Heart right ventricle (tissue), 16 donors: ENCODE measurements at regions of chr22 and their contacts with region 1.

Region 1: DNA sequence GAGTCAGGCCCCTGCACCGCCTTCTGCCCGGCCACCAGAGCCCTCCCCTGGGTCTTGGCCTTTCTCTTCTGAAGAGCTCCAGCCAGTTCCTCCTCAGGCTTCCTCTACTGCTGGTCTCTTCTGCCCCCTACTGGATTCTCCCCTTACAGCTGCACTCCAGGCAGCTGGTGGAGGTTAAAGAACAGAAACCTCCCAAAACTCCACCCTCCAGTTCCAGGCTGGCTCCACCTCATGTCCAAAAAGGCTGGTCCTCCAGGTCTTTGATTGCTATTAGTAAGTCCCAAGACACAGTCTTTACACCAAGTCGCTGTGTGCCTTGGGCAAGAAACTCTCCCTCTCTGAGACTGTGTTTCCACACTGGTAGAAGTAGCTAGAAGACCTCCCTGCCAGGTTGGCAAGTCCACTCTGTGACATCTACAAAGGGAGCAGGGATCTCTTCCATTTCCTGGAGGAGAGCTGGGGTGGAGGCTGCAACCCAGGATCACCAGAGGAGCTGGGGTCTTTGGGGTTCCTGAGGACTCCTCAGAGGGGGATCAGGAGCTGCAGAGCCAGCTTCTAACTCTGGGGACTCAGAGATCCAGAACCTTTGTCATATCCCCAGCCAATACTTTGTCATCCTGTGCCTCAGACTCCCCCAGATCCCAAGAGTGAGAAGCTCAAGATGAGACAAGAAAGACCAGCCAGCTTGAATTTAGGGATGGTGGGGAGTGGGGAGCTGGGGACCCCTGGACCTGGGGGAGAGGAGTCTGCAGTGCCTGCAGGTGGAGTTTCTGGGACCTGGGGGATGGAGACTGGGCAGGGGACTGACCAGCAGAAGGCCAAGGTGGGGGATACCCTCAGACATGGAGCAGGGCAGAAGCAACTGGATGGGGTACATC is 3.4 kb upstream of the IGLL5 start:
- DNase-seq: peak in 1 of 2 donors; percentile 64
- ATAC-seq: peak in 6 of 8 donors; percentile 55 to 80 (median 72)
- H3K4me3 ChIP-seq: no peak overlapping the region
- H3K27ac ChIP-seq: no peak overlapping the region
- H3K4me1 ChIP-seq: no peaks in the 10 kb centered on the region
- H3K27me3 ChIP-seq: peaks cover 0 to 47% (median 20%) of the 10 kb centered on the region in 7 donors
- CTCF ChIP-seq: peak; percentile 34 to 81 (median 72)

Region 2: GRCh38 chr22:22342697-22343580 is 541.3 kb before region 1 on chr22:
- intact Hi-C with region 1: loop called in 1 of 10 experiments (anchors 10 kb)
- DNase-seq: peak in 1 of 2 donors; percentile 31
- ATAC-seq: peak in 2 of 8 donors; percentile 35 to 68
- H3K4me3 ChIP-seq: no peak overlapping the region
- H3K27ac ChIP-seq: no peak overlapping the region
- H3K4me1 ChIP-seq: peaks cover 0 to 15% (median 0%) of the 10 kb centered on the region in 9 donors
- H3K27me3 ChIP-seq: peaks cover 0 to 51% (median 27%) of the 10 kb centered on the region in 7 donors
- CTCF ChIP-seq: peak; percentile 63 to 90 (median 73)

Region 3: DNA sequence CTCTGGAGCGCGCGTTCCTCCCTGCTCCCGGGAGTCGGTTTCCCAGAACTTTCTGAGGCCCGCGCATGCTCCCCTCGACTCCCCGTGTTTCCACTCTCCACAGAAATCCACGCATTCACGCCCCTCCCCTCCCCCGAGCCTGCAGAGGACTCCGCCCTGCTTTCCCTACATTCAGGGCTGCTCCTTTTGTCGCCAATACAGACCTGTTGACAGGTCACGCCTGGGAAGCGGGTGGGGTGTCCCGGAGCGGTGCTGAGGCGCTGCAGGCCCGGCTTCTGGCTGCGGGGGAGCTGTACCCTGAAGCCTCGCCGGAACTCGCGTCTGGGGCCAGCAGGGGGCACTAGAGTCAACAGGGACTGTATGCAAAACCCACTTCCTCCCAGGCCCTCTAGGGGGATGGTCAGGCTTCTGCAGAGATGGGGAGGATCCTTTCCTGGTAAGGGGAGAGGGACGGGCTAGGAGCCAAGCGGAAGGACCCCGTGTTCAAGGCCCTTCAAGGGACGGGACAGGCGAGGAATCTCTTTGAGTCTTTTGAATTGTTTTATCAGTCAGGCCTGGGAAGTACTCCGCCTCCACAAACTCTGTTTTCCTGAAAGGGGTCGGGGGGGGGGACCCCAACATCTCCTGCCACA is 325.2 kb before region 1 on chr22 and contains the start of gene PRAME:
- intact Hi-C with region 1: no loop called
- DNase-seq: peak in 1 of 2 donors; percentile 39
- ATAC-seq: peak in 2 of 8 donors; percentile 48 to 56
- H3K4me3 ChIP-seq: no peak within 1 kb of the TSS
- H3K27ac ChIP-seq: no peak within 1 kb of the TSS
- H3K4me1 ChIP-seq: peaks cover 0 to 10% (median 0%) of the 10 kb centered on the region in 9 donors
- H3K27me3 ChIP-seq: peaks cover 0 to 2% (median 0%) of the 10 kb centered on the region in 7 donors
- CTCF ChIP-seq: peak; percentile 12 to 71 (median 38)
- total RNA-seq, gene PRAME: 0.35 to 0.49 (median 0.46) TPM in 3 of 10 donors, not detected in the others

Region 4: GRCh38 chr22:22655452-22656290 is 228.6 kb before region 1 on chr22:
- intact Hi-C with region 1: no loop called
- DNase-seq: no peak
- ATAC-seq: no peak
- H3K4me3 ChIP-seq: no peak overlapping the region
- H3K27ac ChIP-seq: no peak overlapping the region
- H3K4me1 ChIP-seq: no peaks in the 10 kb centered on the region
- H3K27me3 ChIP-seq: peaks cover 0 to 15% (median 3%) of the 10 kb centered on the region in 7 donors
- CTCF ChIP-seq: no peak

Region 5: GRCh38 chr22:22753526-22754267 is 130.6 kb before region 1 on chr22:
- intact Hi-C with region 1: loop called in 1 of 10 experiments (anchors 10 kb)
- DNase-seq: peak in 1 of 2 donors; percentile 31
- ATAC-seq: peak in 6 of 8 donors; percentile 36 to 51 (median 42)
- H3K4me3 ChIP-seq: no peak overlapping the region
- H3K27ac ChIP-seq: peak overlapping the region in 1 of 10 donors; percentile 68
- H3K4me1 ChIP-seq: peaks cover 0 to 23% (median 0%) of the 10 kb centered on the region in 9 donors
- H3K27me3 ChIP-seq: peaks cover 0 to 28% (median 3%) of the 10 kb centered on the region in 7 donors
- CTCF ChIP-seq: peak in 7 of 9 donors; percentile 49 to 77 (median 53)

Region 6: GRCh38 chr22:22802339-22802970 is 81.8 kb before region 1 on chr22:
- intact Hi-C with region 1: loop called in 4 of 10 experiments (anchors 5 to 10 kb)
- DNase-seq: no peak
- ATAC-seq: no peak
- H3K4me3 ChIP-seq: no peak overlapping the region
- H3K27ac ChIP-seq: no peak overlapping the region
- H3K4me1 ChIP-seq: no peaks in the 10 kb centered on the region
- H3K27me3 ChIP-seq: peaks cover 0 to 61% (median 27%) of the 10 kb centered on the region in 7 donors
- CTCF ChIP-seq: peak in 3 of 9 donors; percentile 40 to 49 (median 44)

Region 7: GRCh38 chr22:22810018-22810427 is 74.2 kb before region 1 on chr22:
- intact Hi-C with region 1: loop called in 4 of 10 experiments (anchors 5 to 10 kb)
- DNase-seq: peak in 1 of 2 donors; percentile 40
- ATAC-seq: peak in 6 of 8 donors; percentile 46 to 74 (median 70)
- H3K4me3 ChIP-seq: no peak overlapping the region
- H3K27ac ChIP-seq: no peak overlapping the region
- H3K4me1 ChIP-seq: no peaks in the 10 kb centered on the region
- H3K27me3 ChIP-seq: peaks cover 0 to 33% (median 5%) of the 10 kb centered on the region in 7 donors
- CTCF ChIP-seq: peak in 8 of 9 donors; percentile 31 to 86 (median 74)

Region 8: DNA sequence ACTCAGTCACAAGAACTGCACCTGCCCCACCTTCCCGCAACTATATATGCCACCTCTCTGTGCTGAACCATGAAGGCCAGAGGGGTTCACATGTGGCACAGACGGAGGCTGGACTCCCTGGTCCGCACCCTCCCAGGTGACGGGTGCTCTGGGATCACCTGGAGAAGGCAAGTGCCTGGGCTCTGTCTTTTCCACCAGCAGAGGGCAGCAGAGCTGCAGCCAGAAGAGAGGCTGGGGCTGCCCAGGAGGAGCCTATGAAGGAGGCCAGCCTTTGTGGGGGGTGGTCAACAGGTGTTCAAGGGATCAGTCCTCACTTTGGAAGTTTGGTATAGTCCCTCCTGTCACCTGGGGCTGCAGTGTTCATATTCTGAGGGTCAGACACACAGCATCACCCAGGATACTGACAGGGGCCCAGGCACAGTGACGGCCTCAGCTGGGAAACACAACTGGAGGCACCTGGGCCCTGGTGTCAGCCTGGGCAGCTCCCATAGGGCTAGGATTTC is 35.8 kb before region 1 on chr22:
- intact Hi-C with region 1: loop called in 1 of 10 experiments (anchors 5 kb)
- DNase-seq: peak; percentile 41 to 51
- ATAC-seq: peak in 7 of 8 donors; percentile 61 to 79 (median 65)
- H3K4me3 ChIP-seq: no peak overlapping the region
- H3K27ac ChIP-seq: no peak overlapping the region
- H3K4me1 ChIP-seq: no peaks in the 10 kb centered on the region
- H3K27me3 ChIP-seq: peaks cover 0 to 28% (median 22%) of the 10 kb centered on the region in 7 donors
- CTCF ChIP-seq: peak; percentile 70 to 96 (median 86)

Region 9: DNA sequence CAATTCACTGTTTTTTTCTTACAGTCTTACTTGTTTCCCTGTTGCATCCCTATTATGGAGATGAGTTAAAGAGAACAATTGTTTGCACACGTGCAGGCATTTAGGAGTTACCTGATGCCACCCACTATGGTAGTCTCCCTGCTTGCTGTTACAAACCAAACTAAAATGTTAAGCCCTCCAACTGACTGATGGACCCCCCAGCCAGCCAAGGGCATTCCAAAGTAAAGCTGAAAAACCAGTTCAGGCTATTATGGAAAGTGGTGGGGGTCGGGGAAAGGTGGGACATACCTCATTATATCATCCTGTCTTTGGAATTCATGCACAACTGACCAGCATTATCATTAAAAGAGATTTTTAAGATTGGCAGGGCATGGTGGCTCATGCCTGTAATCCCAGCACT is 139.0 kb after region 1 on chr22:
- intact Hi-C with region 1: no loop called
- DNase-seq: no peak
- ATAC-seq: no peak
- H3K4me3 ChIP-seq: no peak overlapping the region
- H3K27ac ChIP-seq: no peak overlapping the region
- H3K4me1 ChIP-seq: no peaks in the 10 kb centered on the region
- H3K27me3 ChIP-seq: peaks cover 0 to under 1% (median 0%) of the 10 kb centered on the region in 7 donors
- CTCF ChIP-seq: no peak